Activated CD4-positive, alpha-beta memory T cell treated with anti-CD3 and anti-CD28 coated beads, Interleukin-2, amount 10 ng/mL, durations not matched to agents 7 days and 5 days (primary cell): ENCODE measurements at regions of chr12 and their contacts with region 1.

Region 1: DNA sequence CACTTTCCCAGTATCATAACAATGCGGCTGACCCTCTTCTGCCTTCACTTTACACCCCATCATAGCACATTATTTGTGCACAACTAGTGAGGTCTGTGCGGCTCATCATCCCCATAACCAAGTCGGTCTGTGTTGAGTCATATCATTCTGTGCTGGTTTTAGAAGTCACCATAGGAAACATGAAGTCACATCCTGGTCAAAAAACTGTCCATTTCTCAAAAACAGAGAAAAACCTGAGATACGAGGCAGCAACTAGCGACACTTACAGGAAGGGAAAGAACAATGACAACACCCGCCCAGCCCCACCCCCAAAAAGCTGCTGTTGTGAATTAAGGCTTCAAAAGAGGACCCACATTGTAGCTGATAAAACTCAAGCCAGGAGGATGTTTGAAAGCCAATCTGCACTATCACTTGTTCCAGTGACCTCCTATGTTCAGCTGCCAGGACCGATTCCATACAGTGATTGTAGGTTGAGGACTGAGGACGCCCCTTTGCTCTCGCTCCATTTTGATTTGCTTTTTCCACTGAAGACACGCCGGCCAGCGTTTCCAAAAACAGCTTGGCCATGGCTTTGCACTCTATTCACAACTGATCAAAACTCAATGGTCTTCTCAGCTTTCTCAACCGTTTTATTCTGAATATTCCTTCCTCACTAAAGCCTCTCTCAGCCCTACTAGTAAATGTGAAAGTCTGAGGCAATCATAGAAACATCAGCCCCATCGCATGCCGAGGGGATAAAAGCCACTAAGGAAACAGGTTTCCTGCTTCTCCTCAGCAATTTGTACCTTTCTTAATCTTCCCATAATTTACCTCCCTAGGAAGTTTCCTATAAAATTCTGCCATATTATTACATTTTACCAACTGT is 87.5 kb downstream of the DUSP16 start:
- DNase-seq: peak; percentile 74
- H3K4me3 Mint-ChIP-seq: peak overlapping the region; percentile 67
- H3K27ac Mint-ChIP-seq: peak overlapping the region; percentile 100
- H3K4me1 Mint-ChIP-seq: peaks cover 86% of the 10 kb centered on the region
- H3K27me3 Mint-ChIP-seq: no peaks in the 10 kb centered on the region

Region 2: DNA sequence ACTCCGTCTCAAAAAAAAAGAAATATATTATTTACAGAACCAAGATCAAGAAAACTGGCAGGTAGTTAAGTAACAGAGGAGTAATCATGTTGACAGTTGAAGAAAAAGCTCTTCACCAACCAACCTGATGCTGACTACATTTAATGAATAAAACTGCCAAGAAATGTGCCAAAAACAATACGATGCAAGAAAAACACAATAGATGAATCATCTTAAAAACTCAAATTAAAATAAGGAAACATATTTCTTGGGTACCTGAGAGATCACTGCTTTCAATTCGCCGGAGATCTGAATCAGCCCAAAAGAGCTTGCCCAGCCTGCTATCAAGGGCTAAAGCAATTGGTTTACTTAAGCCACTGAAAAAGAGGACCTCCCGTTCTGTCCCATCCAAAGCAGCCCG is 328.1 kb before region 1 on chr12:
- CTCF ChIA-PET with region 1: no interaction called
- POLR2A ChIA-PET with region 1: no interaction called
- DNase-seq: no peak
- H3K4me3 Mint-ChIP-seq: no peak overlapping the region
- H3K27ac Mint-ChIP-seq: no peak overlapping the region
- H3K4me1 Mint-ChIP-seq: no peaks in the 10 kb centered on the region
- H3K27me3 Mint-ChIP-seq: peaks cover 14% of the 10 kb centered on the region

Region 3: DNA sequence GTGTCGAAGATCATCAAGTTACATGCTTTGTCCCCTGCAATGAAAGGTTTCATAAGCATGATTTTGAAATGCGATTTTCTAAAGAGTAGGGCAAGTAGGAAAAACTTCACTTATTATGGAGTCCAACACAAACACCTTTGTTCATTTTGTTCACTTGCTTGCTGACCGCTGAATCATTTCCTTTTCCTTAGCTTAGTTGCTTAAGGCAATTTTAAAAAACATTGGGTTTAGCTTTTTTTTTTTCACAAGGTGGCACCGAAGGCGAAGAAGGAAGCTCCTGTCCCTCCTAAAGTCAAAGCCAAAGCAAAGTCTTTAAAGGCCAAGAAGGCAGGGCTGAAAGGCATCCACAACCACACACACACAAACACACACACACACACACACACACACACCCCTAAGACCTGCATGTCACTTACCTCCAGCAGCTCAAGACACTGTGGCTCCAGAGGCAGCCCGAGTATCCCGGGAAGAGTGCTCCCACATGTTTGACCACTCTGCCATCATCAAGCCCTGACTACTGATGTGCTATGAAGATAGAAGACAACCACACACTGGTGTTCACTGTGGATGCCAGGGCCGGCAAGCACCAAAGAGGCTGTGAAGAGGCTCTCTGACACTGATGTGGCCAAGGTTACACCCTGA is 136.5 kb before region 1 on chr12:
- CTCF ChIA-PET with region 1: no interaction called
- POLR2A ChIA-PET with region 1: no interaction called
- DNase-seq: no peak
- H3K4me3 Mint-ChIP-seq: no peak overlapping the region
- H3K27ac Mint-ChIP-seq: no peak overlapping the region
- H3K4me1 Mint-ChIP-seq: peaks cover 23% of the 10 kb centered on the region
- H3K27me3 Mint-ChIP-seq: no peaks in the 10 kb centered on the region

Region 4: DNA sequence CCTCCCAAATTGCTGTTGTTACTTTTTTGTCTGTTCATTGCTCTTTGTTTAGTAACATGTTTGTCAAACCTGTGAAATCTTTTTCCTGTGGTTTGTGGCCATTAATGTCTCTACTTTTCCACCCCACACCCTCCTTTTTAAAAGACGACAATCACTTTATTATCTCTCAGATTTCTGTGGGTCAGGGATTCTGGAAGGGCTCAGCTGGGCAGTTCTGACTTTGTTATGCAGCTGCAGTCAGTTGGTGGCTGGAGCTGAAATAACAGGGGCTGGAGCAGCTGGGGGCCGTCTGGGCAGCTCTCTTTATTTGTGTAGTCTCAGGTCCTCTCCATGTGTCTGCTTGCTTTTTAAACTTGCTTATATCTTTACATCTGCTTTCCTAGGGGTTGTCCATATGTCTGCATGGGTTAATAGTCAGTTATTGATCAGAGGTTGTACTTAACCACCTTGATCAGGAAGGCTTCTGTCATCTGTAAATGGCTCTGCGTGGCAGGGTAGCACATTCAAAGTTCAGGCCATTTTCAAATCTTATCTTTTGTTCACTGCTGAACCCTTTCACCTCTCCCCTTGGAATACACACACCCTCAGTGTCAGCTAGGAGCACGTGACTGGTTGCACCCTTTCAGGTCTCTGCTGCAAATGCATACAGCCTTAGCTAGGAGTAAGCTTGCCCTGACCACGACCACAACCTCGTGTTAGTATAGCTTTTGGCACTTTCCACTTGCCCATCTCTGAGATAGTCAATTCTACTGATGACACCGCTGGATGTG is 90.4 kb before region 1 on chr12:
- CTCF ChIA-PET with region 1: interaction called, 41 read pairs
- POLR2A ChIA-PET with region 1: interaction called, 238 read pairs
- DNase-seq: peak; percentile 85
- H3K4me3 Mint-ChIP-seq: peak overlapping the region; percentile 57
- H3K27ac Mint-ChIP-seq: peak overlapping the region; percentile 97
- H3K4me1 Mint-ChIP-seq: peaks cover 83% of the 10 kb centered on the region
- H3K27me3 Mint-ChIP-seq: no peaks in the 10 kb centered on the region

Region 5: GRCh38 chr12:12403264-12404248 is 71.6 kb before region 1 on chr12:
- CTCF ChIA-PET with region 1: no interaction called
- POLR2A ChIA-PET with region 1: interaction called, 12 read pairs
- DNase-seq: no peak
- H3K4me3 Mint-ChIP-seq: no peak overlapping the region
- H3K27ac Mint-ChIP-seq: peak overlapping the region; percentile 19
- H3K4me1 Mint-ChIP-seq: peaks cover 66% of the 10 kb centered on the region
- H3K27me3 Mint-ChIP-seq: no peaks in the 10 kb centered on the region

Region 6: DNA sequence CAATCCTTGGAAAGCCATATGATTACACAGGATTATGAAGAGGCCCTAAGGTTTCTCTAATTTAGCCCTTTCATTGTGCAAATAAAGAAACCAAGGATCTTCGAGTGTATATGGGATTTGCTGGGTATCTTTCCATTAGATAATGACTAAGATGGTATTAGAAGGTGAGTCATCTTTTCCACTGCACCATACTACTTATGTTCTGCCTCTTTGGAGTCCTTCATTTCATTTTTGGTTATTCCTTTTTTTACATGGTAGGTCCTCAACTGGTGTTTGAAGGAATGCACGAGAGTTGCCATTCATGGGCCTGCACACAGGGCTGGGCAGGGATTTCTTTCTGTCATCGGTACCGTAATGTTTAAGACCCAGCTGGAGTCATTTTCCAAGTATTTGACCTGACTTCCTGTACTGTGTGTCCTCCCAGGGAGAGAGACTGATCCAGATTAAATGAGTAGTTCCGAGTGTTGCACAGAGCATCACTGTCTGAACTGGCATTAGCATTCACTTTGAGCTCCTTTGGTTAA is 32.6 kb before region 1 on chr12:
- CTCF ChIA-PET with region 1: interaction called, 10 read pairs
- POLR2A ChIA-PET with region 1: interaction called, 380 read pairs
- DNase-seq: no peak
- H3K4me3 Mint-ChIP-seq: peak overlapping the region; percentile 39
- H3K27ac Mint-ChIP-seq: peak overlapping the region; percentile 98
- H3K4me1 Mint-ChIP-seq: peaks cover 91% of the 10 kb centered on the region
- H3K27me3 Mint-ChIP-seq: no peaks in the 10 kb centered on the region

Region 7: DNA sequence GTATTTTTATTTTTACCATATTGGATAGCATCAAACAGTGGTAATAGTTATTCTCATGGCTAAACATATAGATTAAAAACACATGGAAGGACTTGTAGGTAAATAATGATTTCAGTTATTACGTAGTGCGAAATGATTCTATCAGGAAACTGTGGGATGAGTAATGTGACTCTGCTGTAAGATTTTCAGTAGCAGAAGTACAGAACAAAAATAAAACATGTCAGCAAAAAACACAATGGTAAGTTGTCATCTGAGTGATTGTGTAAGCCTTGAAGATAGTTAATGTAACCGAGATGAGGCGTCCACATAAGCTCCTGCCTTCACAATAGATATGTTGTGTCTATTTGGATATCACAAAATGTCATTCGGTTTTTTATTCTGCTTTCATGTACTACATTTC is 18.5 kb before region 1 on chr12:
- CTCF ChIA-PET with region 1: interaction called, 10 read pairs
- POLR2A ChIA-PET with region 1: interaction called, 579 read pairs
- DNase-seq: no peak
- H3K4me3 Mint-ChIP-seq: peak overlapping the region; percentile 46
- H3K27ac Mint-ChIP-seq: peak overlapping the region; percentile 84
- H3K4me1 Mint-ChIP-seq: peaks cover 61% of the 10 kb centered on the region
- H3K27me3 Mint-ChIP-seq: no peaks in the 10 kb centered on the region

Region 8: DNA sequence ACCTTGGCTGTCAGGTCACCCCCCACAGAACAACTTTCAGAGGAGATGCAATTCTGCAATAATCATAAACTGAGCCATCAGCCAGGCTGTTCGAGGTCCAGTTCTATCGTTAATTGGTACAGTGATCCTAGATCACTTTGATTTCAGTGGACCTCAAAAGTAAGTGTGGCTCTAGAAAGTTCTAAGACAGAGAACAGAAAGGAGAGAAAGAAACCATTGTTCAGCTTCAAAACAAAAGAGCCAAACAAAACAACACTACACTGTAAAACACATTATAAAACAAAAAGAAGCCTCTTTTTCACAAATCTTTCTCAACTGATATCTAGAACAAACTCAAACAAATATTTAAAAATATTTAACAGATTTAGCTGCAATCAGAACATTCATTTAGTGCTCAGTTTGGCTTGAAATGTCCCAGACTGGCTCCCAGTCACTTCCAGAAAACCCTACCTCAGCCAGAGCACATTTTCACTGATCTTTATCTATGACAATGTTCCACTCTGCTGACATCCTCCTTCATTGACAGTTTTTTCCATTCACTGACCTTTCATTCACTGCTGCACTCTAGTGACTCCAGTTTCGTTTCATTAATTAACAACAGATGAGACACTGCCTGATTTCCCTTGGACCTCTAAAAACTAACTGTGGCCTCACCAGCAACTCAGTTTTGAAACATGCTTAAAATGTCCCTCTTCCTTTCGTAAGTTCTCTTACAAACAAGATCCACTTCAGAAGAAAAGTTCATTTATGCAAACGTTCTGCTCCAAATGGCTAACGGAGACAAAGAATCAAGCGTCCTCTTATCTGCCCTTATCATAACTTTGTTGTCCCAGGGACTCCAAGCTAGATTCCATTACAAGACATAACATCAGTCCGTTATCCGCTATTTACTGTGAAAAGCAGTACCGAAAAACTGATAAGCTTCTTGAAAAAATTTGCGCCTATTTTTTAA is 30.7 kb after region 1 on chr12:
- CTCF ChIA-PET with region 1: interaction called, 9 read pairs
- POLR2A ChIA-PET with region 1: interaction called, 174 read pairs
- DNase-seq: no peak
- H3K4me3 Mint-ChIP-seq: peak overlapping the region; percentile 65
- H3K27ac Mint-ChIP-seq: peak overlapping the region; percentile 81
- H3K4me1 Mint-ChIP-seq: peaks cover 76% of the 10 kb centered on the region
- H3K27me3 Mint-ChIP-seq: no peaks in the 10 kb centered on the region

Region 9: DNA sequence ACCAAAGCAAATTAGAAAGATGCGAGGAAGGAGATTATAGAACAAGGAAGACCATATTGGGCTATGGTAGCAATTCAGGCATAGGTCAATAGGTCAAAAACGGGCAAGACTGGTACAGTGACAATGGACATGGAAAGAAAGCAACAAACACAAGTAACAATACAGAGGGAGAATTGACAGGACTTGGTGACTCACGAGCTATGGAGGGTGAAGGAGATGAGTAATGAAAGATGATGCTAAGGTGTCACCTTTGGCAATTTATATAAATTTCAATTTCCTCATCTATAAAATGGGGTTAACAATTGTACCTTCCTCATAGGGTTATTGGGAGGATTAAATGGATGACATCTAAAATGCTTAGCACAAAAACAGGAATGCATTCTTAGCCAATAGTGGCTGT is 102.6 kb after region 1 on chr12:
- CTCF ChIA-PET with region 1: no interaction called
- POLR2A ChIA-PET with region 1: no interaction called
- DNase-seq: no peak
- H3K4me3 Mint-ChIP-seq: no peak overlapping the region
- H3K27ac Mint-ChIP-seq: no peak overlapping the region
- H3K4me1 Mint-ChIP-seq: peaks cover 13% of the 10 kb centered on the region
- H3K27me3 Mint-ChIP-seq: no peaks in the 10 kb centered on the region

Region 10: GRCh38 chr12:12696562-12697383 is 221.6 kb after region 1 on chr12:
- CTCF ChIA-PET with region 1: no interaction called
- POLR2A ChIA-PET with region 1: interaction called, 53 read pairs
- DNase-seq: peak; percentile 93
- H3K4me3 Mint-ChIP-seq: peak overlapping the region; percentile 83
- H3K27ac Mint-ChIP-seq: peak overlapping the region; percentile 100
- H3K4me1 Mint-ChIP-seq: peaks cover 63% of the 10 kb centered on the region
- H3K27me3 Mint-ChIP-seq: no peaks in the 10 kb centered on the region